Psoas muscle (tissue), 8 donors: ENCODE measurements at regions of chr2 and their contacts with region 1.

Region 1: DNA sequence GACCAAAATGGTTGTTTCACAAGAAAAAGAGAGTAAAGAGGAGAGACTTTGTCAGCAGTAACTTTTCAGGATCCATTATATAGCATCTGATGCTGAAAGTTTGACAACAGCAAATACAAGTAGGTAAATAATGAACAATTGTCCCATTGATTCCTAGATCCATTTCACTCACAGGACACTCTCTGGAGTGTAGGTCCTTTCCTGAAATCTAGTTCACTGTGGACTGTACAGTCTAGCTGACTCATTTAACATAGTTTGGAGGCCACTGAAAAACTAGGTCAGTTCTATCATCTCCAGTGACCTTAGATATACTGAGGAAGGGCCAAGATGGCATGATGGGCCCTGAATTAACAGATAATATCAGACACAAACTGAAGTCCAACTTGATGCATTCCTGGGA is 19.3 kb upstream of the NEB start:
- DNase-seq: no peak
- ATAC-seq: peak; percentile 84 to 90 (median 88)
- H3K4me3 ChIP-seq: no peak overlapping the region
- H3K27ac ChIP-seq: peak overlapping the region; percentile 93
- H3K4me1 ChIP-seq: peaks cover 54% of the 10 kb centered on the region
- H3K27me3 ChIP-seq: no peaks in the 10 kb centered on the region
- CTCF ChIP-seq: no peak

Region 2: GRCh38 chr2:151518802-151519201 is 234.7 kb before region 1 on chr2:
- intact Hi-C with region 1: no loop called
- DNase-seq: no peak
- ATAC-seq: peak in 3 of 4 donors; percentile 31 to 54 (median 44)
- H3K4me3 ChIP-seq: no peak overlapping the region
- H3K27ac ChIP-seq: peak overlapping the region; percentile 3
- H3K4me1 ChIP-seq: no peaks in the 10 kb centered on the region
- H3K27me3 ChIP-seq: no peaks in the 10 kb centered on the region
- CTCF ChIP-seq: no peak

Region 3: GRCh38 chr2:151733771-151734672 is 19.5 kb before region 1 on chr2 and contains the start of gene NEB:
- intact Hi-C with region 1: loop called in 1 of 2 experiments (anchors 2 kb)
- DNase-seq: peak; percentile 25 to 80
- ATAC-seq: peak; percentile 69 to 84 (median 80)
- H3K4me3 ChIP-seq: peak within 1 kb of the TSS; percentile 75
- H3K27ac ChIP-seq: peak within 1 kb of the TSS; percentile 93
- H3K4me1 ChIP-seq: peaks cover 12% of the 10 kb centered on the region
- H3K27me3 ChIP-seq: no peaks in the 10 kb centered on the region
- CTCF ChIP-seq: no peak
- total RNA-seq, gene NEB: 2,020 to 7,790 (median 5,587) TPM